Psoas muscle (tissue), 8 donors: ENCODE measurements at regions of chr6 and their contacts with region 1.

Region 1: GRCh38 chr6:5746053-5746758 is 260.5 kb downstream of the NRN1 start:
- DNase-seq: no peak
- ATAC-seq: peak; percentile 70 to 93 (median 85)
- H3K4me3 ChIP-seq: no peak overlapping the region
- H3K27ac ChIP-seq: no peak overlapping the region
- H3K4me1 ChIP-seq: peaks cover 27% of the 10 kb centered on the region
- H3K27me3 ChIP-seq: no peaks in the 10 kb centered on the region
- CTCF ChIP-seq: peak; percentile 36

Region 2: DNA sequence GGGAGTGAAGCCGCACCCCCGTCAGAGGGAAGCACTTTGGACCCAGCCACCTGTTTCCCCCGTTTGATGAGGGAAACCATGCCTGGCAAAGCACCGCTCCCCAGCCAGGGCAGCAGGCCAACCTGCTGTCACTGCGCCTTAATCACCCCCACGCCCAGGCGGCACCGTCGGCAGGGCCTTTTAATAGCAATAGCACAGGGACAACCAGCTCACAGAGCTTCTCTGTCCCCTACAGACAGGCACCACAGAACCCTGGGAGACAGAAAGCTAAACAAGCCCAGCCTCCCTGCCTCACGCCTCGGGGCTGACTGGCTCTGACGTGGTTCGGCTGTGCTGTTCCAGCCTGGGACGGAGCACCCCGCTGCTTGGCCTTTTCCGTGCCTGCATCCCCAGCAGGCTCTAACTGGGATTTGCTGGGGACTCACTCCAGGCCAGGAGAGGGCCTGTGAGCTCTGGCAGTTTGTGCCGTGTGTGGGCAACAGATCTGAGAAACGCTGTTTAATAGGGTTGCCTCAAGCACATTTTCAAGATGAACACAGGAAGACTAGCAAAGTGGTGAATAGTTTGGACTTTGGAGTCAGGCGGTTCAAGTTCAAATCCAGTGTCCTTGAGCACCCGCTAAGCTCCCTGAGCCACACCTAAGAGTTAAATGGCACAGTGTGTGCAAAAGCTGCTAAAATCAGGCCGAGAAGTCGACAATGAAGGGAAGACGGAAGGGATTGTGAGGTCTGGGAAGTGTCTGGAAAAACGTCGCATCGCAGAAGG is 36.8 kb after region 1 on chr6:
- intact Hi-C with region 1: no loop called
- DNase-seq: peak; percentile 62 to 86
- ATAC-seq: peak; percentile 93 to 98 (median 96)
- H3K4me3 ChIP-seq: peak overlapping the region; percentile 31
- H3K27ac ChIP-seq: peak overlapping the region; percentile 77
- H3K4me1 ChIP-seq: peaks cover 8% of the 10 kb centered on the region
- H3K27me3 ChIP-seq: no peaks in the 10 kb centered on the region
- CTCF ChIP-seq: no peak

Region 3: DNA sequence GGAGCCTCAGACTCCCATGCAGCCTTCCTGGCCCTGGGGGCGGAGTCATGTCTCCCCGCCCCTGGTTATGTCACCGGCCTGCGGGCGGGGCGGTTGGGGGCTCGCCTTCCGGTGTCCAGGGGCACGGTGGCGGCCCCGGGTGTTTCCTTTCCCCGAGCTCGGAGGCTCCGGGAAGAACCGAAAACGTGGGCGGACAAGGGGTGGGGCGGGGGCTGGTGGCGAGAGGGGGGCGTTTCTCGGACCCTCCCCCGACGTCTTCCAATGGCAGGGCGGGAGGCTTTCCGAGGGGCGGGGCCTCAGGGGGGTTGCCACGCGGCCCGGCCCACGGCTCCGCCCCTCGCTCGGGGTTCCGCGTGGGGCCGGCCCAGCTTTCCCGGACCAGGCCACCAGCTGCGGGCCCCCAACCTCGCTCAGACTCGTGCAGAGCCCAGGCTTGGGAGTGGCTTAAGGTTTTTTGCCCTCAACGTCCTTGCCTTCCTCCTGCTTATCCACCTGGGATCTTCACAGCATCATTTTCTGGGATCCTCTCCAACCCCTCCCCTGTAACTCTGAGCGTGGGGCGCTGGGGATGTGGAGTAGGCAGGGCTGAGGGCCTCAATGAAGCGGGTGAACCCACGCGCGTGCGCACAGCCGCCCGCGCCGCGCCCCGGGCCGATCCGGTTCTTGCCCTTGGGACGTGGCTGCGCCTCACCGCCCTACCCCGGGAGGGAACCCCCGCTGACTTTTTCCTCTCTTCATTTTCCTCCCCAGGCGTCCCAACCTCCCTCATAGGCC is 262.6 kb after region 1 on chr6:
- intact Hi-C with region 1: loop called in 1 of 2 experiments (anchors 10 kb)
- DNase-seq: peak; percentile 64 to 82
- ATAC-seq: peak; percentile 69 to 79 (median 78)
- H3K4me3 ChIP-seq: peak overlapping the region; percentile 65
- H3K27ac ChIP-seq: peak overlapping the region; percentile 66
- H3K4me1 ChIP-seq: peaks cover 17% of the 10 kb centered on the region
- H3K27me3 ChIP-seq: peaks cover 7 to 69% (median 38%) of the 10 kb centered on the region in 3 donors
- CTCF ChIP-seq: no peak